ENCODE measurements at regions of chr11 and their contacts with region 1.

Region 1: GRCh38 chr11:72752088-72752914 is at the start of gene ARAP1:
- DNase-seq: peak; percentile 89 to 90
- H3K4me3 ChIP-seq: peak within 1 kb of the TSS; percentile 75
- H3K4me3 Mint-ChIP-seq: peak within 1 kb of the TSS; percentile 89
- H3K27ac Mint-ChIP-seq: peak within 1 kb of the TSS; percentile 94
- H3K4me1 ChIP-seq: peaks cover 30% of the 10 kb centered on the region
- H3K4me1 Mint-ChIP-seq: peaks cover 53% of the 10 kb centered on the region
- H3K27me3 ChIP-seq: no peaks in the 10 kb centered on the region
- H3K27me3 Mint-ChIP-seq: no peaks in the 10 kb centered on the region
- CTCF ChIP-seq: peak in 1 of 2 experiments; percentile 28
- total RNA-seq, gene ARAP1: 87.1 and 102 TPM in 2 replicates

Region 2: DNA sequence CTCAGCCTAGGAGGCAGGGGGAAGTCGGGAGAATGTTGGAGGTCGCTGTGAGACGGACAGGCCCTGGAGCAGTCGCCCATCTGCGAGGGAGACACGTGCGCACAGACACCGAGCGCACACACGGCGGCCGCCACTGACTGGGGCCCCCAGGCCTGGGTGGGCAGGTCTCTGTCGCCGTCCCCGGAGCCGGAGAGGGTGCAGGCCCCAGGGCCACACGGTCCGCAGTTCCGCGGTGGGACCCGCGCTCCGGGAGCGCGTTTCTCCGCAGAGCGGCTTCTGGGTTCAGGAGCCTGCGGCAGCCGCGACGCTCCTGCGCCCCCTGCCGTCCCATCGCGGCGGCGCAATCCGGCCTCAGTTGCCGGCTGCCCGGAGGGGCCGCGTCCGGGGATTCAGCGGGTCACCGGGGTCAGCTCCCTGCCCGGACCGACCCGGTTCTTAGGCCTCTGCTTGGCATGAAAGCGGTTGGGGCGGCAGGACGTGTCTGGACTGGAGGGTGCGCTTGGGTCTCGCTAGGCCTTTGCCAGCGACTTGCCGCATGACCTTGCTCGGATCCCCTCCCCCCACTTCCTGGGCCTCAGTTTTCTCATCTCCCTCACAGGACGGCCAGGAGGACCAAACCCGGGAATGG is 109.3 kb before region 1 on chr11:
- CTCF ChIA-PET with region 1: no interaction called
- POLR2A ChIA-PET with region 1: no interaction called
- intact Hi-C with region 1: no loop called
- DNase-seq: peak; percentile 60 to 85
- H3K4me3 ChIP-seq: peak overlapping the region; percentile 52
- H3K4me3 Mint-ChIP-seq: peak overlapping the region; percentile 61
- H3K27ac Mint-ChIP-seq: no peak overlapping the region
- H3K4me1 ChIP-seq: peaks cover 5% of the 10 kb centered on the region; the same call in 1 of the 2 replicates
- H3K4me1 Mint-ChIP-seq: no peaks in the 10 kb centered on the region
- H3K27me3 ChIP-seq: peaks cover 12% of the 10 kb centered on the region
- H3K27me3 Mint-ChIP-seq: peaks cover 3% of the 10 kb centered on the region
- CTCF ChIP-seq: peak; percentile 97 to 100

Region 3: DNA sequence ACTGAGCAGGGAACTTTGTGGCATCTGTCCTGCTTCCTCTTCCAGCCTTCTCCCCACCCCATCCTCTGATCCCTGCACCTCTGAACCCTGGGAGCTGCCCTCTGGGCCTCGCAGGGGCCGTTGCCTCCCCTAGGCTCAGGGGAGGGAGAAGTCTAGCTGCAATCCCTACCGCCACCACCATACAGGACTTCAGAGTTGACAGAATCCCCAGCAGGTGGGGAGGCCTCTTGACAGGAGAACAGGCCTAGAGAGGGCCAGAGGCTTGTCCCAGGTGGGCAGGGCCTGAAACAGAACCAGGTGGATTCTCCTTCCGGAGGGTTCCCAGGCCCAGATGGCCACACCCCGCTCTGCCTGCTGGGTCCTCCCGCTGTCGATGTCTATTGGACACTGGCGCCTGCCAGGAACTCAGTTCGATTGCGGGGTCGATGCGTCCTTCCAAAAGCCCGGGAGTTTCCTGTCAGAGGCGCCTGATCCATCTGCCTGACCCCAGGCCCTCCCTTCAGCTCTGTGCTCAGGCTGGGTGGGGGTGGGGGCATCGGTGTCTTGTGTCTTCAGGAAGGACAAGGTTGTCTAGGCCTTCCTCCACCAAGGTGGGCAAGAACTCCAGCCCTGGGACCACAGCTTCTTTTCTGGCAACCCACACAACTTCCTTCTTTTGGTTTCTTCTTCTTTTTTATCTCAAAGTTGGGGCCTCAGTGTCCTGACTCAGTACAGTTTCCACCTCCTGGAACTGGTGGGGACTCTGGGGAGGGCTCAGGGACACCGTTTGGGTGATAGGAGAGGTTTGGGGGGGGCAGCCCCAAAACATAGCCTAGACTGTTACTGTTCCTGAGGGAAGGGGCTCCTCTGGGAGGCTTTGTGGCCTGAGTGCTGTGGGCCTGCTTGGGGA is 35.2 kb after region 1 on chr11:
- CTCF ChIA-PET with region 1: interaction called, 3 read pairs
- POLR2A ChIA-PET with region 1: interaction called, 7 read pairs
- intact Hi-C with region 1: loop called (anchors 1 kb)
- DNase-seq: peak; percentile 90 to 98
- H3K4me3 ChIP-seq: no peak overlapping the region; the same call in 1 of the 2 replicates
- H3K4me3 Mint-ChIP-seq: peak overlapping the region; percentile 50
- H3K27ac Mint-ChIP-seq: peak overlapping the region; percentile 99
- H3K4me1 ChIP-seq: peaks cover 75% of the 10 kb centered on the region
- H3K4me1 Mint-ChIP-seq: peaks cover 67% of the 10 kb centered on the region
- H3K27me3 ChIP-seq: no peaks in the 10 kb centered on the region
- H3K27me3 Mint-ChIP-seq: no peaks in the 10 kb centered on the region
- CTCF ChIP-seq: peak; percentile 65 to 72

Region 4: GRCh38 chr11:72807021-72807693 is 54.9 kb after region 1 on chr11:
- CTCF ChIA-PET with region 1: no interaction called
- POLR2A ChIA-PET with region 1: interaction called, 10 read pairs
- intact Hi-C with region 1: no loop called
- DNase-seq: no peak
- H3K4me3 ChIP-seq: no peak overlapping the region
- H3K4me3 Mint-ChIP-seq: no peak overlapping the region
- H3K27ac Mint-ChIP-seq: no peak overlapping the region
- H3K4me1 ChIP-seq: 0 out of 2 replicates have a peak, but pooled peaks cover 3% of the 10 kb centered on the region
- H3K4me1 Mint-ChIP-seq: peaks cover 11% of the 10 kb centered on the region
- H3K27me3 ChIP-seq: no peaks in the 10 kb centered on the region
- H3K27me3 Mint-ChIP-seq: no peaks in the 10 kb centered on the region
- CTCF ChIP-seq: no peak

Region 5: GRCh38 chr11:72821883-72822799 is 69.8 kb after region 1 on chr11:
- CTCF ChIA-PET with region 1: no interaction called
- POLR2A ChIA-PET with region 1: no interaction called
- intact Hi-C with region 1: loop called (anchors 2 kb)
- DNase-seq: peak; percentile 95 to 99
- H3K4me3 ChIP-seq: peak overlapping the region; percentile 53
- H3K4me3 Mint-ChIP-seq: peak overlapping the region; percentile 74
- H3K27ac Mint-ChIP-seq: no peak overlapping the region
- H3K4me1 ChIP-seq: peaks cover 5% of the 10 kb centered on the region; the same call in 1 of the 2 replicates
- H3K4me1 Mint-ChIP-seq: no peaks in the 10 kb centered on the region
- H3K27me3 ChIP-seq: no peaks in the 10 kb centered on the region
- H3K27me3 Mint-ChIP-seq: no peaks in the 10 kb centered on the region
- CTCF ChIP-seq: peak; percentile 35 to 39

Measured in Caco-2 (cell line).